Activated CD4-positive, alpha-beta memory T cell treated with anti-CD3 and anti-CD28 coated beads, Interleukin-2, amount 10 ng/mL, durations not matched to agents 7 days and 5 days (primary cell): ENCODE measurements at regions of chr16 and their contacts with region 1.

Region 1: GRCh38 chr16:22353191-22353919 is 21.1 kb downstream of the CDR2 start:
- DNase-seq: no peak
- H3K4me3 Mint-ChIP-seq: no peak overlapping the region
- H3K27ac Mint-ChIP-seq: peak overlapping the region; percentile 77
- H3K4me1 Mint-ChIP-seq: peaks cover 49% of the 10 kb centered on the region
- H3K27me3 Mint-ChIP-seq: no peaks in the 10 kb centered on the region

Region 2: GRCh38 chr16:22369221-22369811 is 16.0 kb after region 1 on chr16:
- CTCF ChIA-PET with region 1: interaction called, 8 read pairs
- POLR2A ChIA-PET with region 1: interaction called, 165 read pairs
- DNase-seq: no peak
- H3K4me3 Mint-ChIP-seq: no peak overlapping the region
- H3K27ac Mint-ChIP-seq: peak overlapping the region; percentile 63
- H3K4me1 Mint-ChIP-seq: peaks cover 75% of the 10 kb centered on the region
- H3K27me3 Mint-ChIP-seq: no peaks in the 10 kb centered on the region

Region 3: DNA sequence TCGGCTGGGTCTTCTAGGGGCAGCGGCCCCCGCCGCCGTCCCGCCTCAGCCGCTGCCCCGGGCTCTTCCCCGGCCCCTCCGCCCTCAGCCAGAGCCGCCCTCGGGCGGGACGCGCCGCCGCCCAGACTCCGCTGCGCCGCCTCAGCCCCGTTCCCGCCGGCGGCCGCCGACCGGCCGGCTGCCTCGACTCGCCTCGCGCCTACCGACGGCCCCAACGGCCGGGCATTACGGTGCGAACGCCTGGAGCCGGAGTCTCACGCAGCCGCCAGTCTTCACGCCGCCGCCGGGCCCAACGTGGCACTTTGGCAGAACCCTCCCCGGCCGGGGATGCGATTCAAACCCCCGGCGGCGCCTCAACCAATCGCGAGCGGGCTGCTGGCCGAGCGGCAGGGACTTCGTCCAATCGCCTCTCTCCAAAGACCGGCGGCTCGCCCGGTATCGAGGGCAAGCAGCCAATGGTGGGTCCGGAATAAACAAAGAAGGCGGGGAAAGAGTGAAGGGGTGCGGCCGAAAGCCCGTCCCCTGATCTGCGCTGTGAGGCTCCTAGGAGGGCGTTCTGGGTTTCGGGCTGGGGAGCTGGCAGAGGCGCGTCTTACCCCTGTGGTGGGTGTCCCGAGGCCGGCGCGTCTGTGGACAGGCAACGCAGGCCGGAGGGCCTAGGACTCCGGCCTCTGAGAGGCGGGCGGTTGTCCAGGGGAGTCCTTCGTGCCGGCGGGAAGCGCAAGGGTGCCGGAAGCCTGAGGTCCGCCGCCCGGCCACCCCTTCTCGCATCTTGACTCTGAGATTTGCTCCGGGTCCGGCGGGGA is 21.2 kb after region 1 on chr16 and contains the start of gene CDR2:
- CTCF ChIA-PET with region 1: interaction called, 8 read pairs
- POLR2A ChIA-PET with region 1: interaction called, 165 read pairs
- DNase-seq: peak; percentile 99
- H3K4me3 Mint-ChIP-seq: peak within 1 kb of the TSS; percentile 96
- H3K27ac Mint-ChIP-seq: peak within 1 kb of the TSS; percentile 92
- H3K4me1 Mint-ChIP-seq: peaks cover 46% of the 10 kb centered on the region
- H3K27me3 Mint-ChIP-seq: peaks cover 2% of the 10 kb centered on the region
- total RNA-seq, gene CDR2: 43.1 to 43.9 TPM

Region 4: DNA sequence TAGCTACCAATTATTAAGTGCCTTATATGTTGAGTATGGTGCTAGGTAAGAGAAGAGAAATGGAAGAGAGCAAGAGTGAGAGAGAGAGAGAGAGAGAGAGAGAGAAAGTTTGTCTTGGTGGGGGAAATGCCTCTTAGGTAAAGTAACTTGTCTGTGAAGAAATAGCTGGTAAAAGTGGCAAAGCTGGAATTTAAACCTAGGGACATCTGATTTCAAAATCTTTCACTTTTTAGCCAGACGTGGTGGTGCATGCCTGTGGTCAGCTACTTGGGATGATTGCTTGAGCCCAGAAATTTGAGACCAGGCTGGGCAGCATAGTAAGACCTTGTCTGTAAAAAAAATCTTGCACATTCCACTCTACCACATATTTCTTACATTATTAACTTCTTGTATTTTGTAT is 44.1 kb after region 1 on chr16:
- CTCF ChIA-PET with region 1: no interaction called
- POLR2A ChIA-PET with region 1: no interaction called
- DNase-seq: no peak
- H3K4me3 Mint-ChIP-seq: no peak overlapping the region
- H3K27ac Mint-ChIP-seq: no peak overlapping the region
- H3K4me1 Mint-ChIP-seq: no peaks in the 10 kb centered on the region
- H3K27me3 Mint-ChIP-seq: no peaks in the 10 kb centered on the region